Calu3 (cell line): ENCODE measurements at regions of chr3 and their contacts with region 1.

Region 1: DNA sequence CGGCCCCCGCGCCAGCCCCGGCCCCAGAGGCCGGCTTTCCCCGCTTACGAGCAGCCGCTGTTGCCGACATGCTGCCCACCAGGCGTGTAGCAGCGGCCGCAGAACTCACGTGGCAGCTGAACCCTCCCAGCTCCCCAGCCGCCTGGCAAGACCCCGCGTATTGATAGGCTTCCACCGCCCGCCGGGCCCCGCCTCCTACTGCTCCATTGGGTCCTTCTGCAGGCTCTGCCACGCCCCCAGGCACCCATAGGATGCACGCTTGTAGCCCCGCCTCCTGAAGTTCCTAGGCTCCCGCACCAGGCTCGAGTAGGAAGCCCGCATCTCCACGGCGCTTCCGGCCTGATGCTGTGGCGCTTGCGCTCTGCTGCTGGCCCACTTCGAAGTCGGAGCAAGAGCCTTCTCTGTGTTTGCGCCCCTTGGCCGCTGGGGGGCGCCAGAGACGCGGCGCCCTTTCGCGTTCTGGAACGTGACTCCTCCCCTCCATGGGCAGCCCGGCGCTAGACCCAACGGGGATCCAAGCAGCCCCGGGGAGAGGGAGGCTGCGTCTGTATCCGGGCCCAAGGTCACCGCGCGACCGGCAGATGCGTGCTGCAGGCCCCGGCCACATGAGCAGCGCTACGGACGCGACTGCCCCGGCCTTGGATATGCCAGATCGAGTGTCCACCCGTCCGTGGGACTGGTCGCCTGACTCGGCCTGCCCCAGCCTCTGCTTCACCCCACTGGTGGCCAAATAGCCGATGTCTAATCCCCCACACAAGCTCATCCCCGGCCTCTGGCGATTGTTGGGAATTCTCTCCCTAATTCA is at the starts of genes PARP3 and RRP9:
- DNase-seq: peak; percentile 99
- H3K4me3 Mint-ChIP-seq: peak within 1 kb of the TSS; percentile 62
- H3K27ac Mint-ChIP-seq: peak within 1 kb of the TSS; percentile 59
- H3K4me1 Mint-ChIP-seq: peaks cover 15% of the 10 kb centered on the region
- H3K27me3 Mint-ChIP-seq: no peaks in the 10 kb centered on the region
- CTCF ChIP-seq: peak; percentile 90
- total RNA-seq, gene PARP3: 15.0 and 20.4 TPM in 2 replicates
- total RNA-seq, gene RRP9: 39.3 and 40.3 TPM in 2 replicates

Region 2: GRCh38 chr3:51974963-51975851 is 33.2 kb after region 1 on chr3 and contains the start of gene ABHD14A:
- CTCF ChIA-PET with region 1: interaction called, 30 read pairs
- intact Hi-C with region 1: loop called (anchors 1 kb)
- DNase-seq: peak; percentile 69
- H3K4me3 Mint-ChIP-seq: peak within 1 kb of the TSS; percentile 99
- H3K27ac Mint-ChIP-seq: peak within 1 kb of the TSS; percentile 91
- H3K4me1 Mint-ChIP-seq: peaks cover 20% of the 10 kb centered on the region
- H3K27me3 Mint-ChIP-seq: no peaks in the 10 kb centered on the region
- CTCF ChIP-seq: no peak
- total RNA-seq, gene ABHD14A: 6.6 and 7.3 TPM in 2 replicates

Region 3: GRCh38 chr3:51982782-51983577 is 41.0 kb after region 1 on chr3 and contains the start of gene ACY1:
- CTCF ChIA-PET with region 1: interaction called, 13 read pairs
- intact Hi-C with region 1: no loop called
- DNase-seq: peak; percentile 89
- H3K4me3 Mint-ChIP-seq: peak within 1 kb of the TSS; percentile 98
- H3K27ac Mint-ChIP-seq: peak within 1 kb of the TSS; percentile 84
- H3K4me1 Mint-ChIP-seq: no peaks in the 10 kb centered on the region
- H3K27me3 Mint-ChIP-seq: no peaks in the 10 kb centered on the region
- CTCF ChIP-seq: no peak
- total RNA-seq, gene ACY1: 71.6 and 74.9 TPM in 2 replicates

Region 4: GRCh38 chr3:52056968-52057805 is 115.2 kb after region 1 on chr3:
- CTCF ChIA-PET with region 1: no interaction called
- intact Hi-C with region 1: loop called (anchors 5 kb)
- DNase-seq: peak; percentile 98
- H3K4me3 Mint-ChIP-seq: peak overlapping the region; percentile 80
- H3K27ac Mint-ChIP-seq: peak overlapping the region; percentile 81
- H3K4me1 Mint-ChIP-seq: peaks cover 35% of the 10 kb centered on the region
- H3K27me3 Mint-ChIP-seq: no peaks in the 10 kb centered on the region
- CTCF ChIP-seq: no peak